Psoas muscle (tissue), 8 donors: ENCODE measurements at regions of chr4 and their contacts with region 1.

Region 1: DNA sequence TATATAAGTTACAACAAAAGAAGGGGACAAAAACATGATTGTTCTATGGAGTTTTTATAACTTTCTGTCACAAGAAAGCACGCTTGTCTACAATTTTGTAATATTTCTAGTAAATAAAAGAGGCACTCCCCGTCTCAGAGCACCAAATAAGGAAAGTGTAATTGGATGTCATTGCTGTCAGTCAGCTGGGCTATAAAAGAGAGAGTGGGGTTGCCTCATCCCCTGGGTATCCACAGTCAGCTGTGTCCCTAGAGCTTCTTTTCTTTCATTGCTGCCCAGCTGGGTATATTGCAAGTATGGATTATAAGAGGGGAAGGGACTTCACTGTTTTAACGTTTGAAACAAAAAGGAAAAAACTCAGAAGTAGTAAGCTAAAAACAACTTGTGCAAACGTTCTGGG is 61.3 kb downstream of the NPNT start:
- DNase-seq: no peak
- ATAC-seq: peak; percentile 72 to 91 (median 82)
- H3K4me3 ChIP-seq: peak overlapping the region; percentile 23
- H3K27ac ChIP-seq: no peak overlapping the region
- H3K4me1 ChIP-seq: no peaks in the 10 kb centered on the region
- H3K27me3 ChIP-seq: no peaks in the 10 kb centered on the region
- CTCF ChIP-seq: no peak

Region 2: GRCh38 chr4:105895583-105896460 is 60.7 kb before region 1 on chr4:
- intact Hi-C with region 1: loop called in 1 of 2 experiments (anchors 2 kb)
- DNase-seq: peak; percentile 34 to 61
- ATAC-seq: peak; percentile 80 to 84 (median 81)
- H3K4me3 ChIP-seq: peak overlapping the region; percentile 76
- H3K27ac ChIP-seq: no peak overlapping the region
- H3K4me1 ChIP-seq: no peaks in the 10 kb centered on the region
- H3K27me3 ChIP-seq: peaks cover 0 to 21% (median 0%) of the 10 kb centered on the region in 3 donors
- CTCF ChIP-seq: no peak